ENCODE measurements at regions of chr21 and their contacts with region 1.

Region 1: DNA sequence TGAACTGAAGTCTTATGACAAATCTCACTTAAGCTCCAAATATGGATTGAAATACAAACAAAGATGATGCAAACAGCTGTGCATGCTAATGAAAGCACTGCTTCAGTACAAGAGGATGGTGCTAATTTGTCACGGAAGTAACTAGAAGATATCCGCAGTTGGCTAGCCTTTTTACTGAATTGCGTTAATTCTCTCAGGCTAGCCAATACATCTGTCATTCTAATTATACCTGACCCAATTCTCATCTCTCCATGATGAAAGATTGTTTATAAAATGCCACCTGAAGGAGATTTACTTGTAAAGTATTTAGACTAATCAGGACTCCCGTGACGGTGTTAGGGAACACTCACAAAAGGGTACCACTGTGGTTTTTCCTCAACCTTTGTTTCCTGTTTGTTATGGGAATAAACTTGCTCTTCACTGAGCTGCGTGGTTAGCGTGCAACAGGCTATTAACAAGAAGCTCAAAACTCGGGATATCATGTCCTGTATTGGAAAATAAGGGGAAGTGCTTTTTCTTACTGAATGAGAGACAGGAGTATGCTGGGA is 162.5 kb downstream of the APP start:
- DNase-seq: no peak
- ATAC-seq: no peak
- H3K4me3 Mint-ChIP-seq: no peak overlapping the region
- H3K27ac Mint-ChIP-seq: peak overlapping the region; percentile 77; the same call in 1 of the 2 replicates
- H3K4me1 Mint-ChIP-seq: peaks cover 55% of the 10 kb centered on the region
- H3K27me3 Mint-ChIP-seq: no peaks in the 10 kb centered on the region
- CTCF ChIP-seq: no peak

Region 2: DNA sequence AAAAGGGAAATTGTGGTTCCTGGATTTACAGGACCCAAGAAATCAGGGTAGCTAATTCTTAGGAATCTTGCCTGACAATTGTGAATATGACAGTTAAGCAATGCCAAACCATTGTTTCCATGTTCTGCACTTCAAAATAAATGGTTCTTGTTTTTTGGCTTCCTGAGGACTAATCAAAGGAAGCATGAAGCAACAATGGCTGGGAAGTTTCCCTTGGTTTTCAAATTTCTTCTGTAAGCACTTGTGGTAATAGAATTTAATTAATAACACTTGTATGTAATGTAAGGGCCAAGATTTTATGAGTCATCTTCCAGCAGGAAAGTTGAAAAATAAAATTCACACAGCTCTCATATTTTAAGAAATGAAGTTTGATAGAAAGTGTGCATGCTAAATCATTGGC is 337.3 kb before region 1 on chr21:
- CTCF ChIA-PET with region 1: no interaction called
- POLR2A ChIA-PET with region 1: interaction called, 11 read pairs
- DNase-seq: no peak
- ATAC-seq: no peak
- H3K4me3 Mint-ChIP-seq: no peak overlapping the region
- H3K27ac Mint-ChIP-seq: no peak overlapping the region
- H3K4me1 Mint-ChIP-seq: no peaks in the 10 kb centered on the region
- H3K27me3 Mint-ChIP-seq: no peaks in the 10 kb centered on the region
- CTCF ChIP-seq: no peak